GM10248 (cell line): ENCODE measurements at regions of chr2 and their contacts with region 1.

Region 1: GRCh38 chr2:171407030-171407675 is 26.6 kb downstream of the METTL8 start:
- DNase-seq: peak; percentile 64
- CTCF ChIP-seq: no peak

Region 2: GRCh38 chr2:171253900-171254655 is 153.1 kb before region 1 on chr2:
- CTCF ChIA-PET with region 1: no interaction called
- POLR2A ChIA-PET with region 1: no interaction called
- DNase-seq: no peak
- CTCF ChIP-seq: no peak

Region 3: GRCh38 chr2:171389325-171389724 is 17.8 kb before region 1 on chr2:
- CTCF ChIA-PET with region 1: interaction called, 13 read pairs
- POLR2A ChIA-PET with region 1: interaction called, 3 read pairs
- DNase-seq: no peak
- CTCF ChIP-seq: no peak

Region 4: GRCh38 chr2:171452773-171453172 is 45.6 kb after region 1 on chr2:
- CTCF ChIA-PET with region 1: no interaction called
- POLR2A ChIA-PET with region 1: no interaction called
- DNase-seq: no peak
- CTCF ChIP-seq: no peak

Region 5: GRCh38 chr2:171598713-171599319 is 191.7 kb after region 1 on chr2:
- CTCF ChIA-PET with region 1: no interaction called
- POLR2A ChIA-PET with region 1: no interaction called
- DNase-seq: peak; percentile 80
- CTCF ChIP-seq: peak; percentile 84